ENCODE measurements at regions of chr17 and their contacts with region 1.

Region 1: GRCh38 chr17:66313995-66314659 is 11.7 kb downstream of the PRKCA start:
- DNase-seq: no peak
- H3K4me3 Mint-ChIP-seq: no peak overlapping the region
- H3K27ac Mint-ChIP-seq: peak overlapping the region; percentile 80
- H3K4me1 Mint-ChIP-seq: peaks cover 77% of the 10 kb centered on the region
- H3K27me3 Mint-ChIP-seq: no peaks in the 10 kb centered on the region

Region 2: DNA sequence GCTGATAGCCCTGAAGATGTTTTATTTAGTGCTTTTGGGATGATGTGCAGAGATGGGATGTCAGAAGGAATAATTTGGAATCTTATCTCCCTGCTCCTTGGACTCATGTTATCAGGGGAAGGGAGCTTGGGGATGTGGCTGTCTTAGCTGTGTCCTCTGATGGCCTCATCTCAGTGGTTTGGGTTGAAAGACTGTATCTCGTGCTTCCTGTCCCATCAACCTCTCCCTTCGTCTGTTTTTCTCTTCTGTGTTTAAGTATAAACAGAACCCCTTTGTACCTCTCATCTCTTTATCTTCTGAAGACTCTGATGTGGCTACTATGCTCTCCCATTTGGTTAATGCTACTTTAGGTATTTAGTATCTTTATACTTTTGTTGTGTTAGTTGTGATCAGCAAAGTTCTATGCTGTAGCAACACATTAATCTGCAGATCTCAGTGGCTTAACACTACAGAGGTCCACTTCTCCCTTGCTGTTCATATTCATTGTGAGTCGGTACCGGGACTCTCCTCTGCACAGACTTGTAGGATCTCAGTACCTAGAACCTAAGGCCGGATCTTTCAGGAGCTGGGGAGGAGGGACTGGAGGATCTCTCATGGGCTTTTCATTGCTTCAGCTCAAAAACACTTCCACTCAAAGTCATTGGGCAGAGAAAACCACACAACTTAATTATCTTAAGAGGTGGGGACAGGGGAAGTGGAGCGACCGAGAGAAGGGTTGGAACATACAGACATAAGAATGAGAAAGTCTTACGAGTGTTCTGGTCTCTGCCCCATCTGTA is 17.1 kb after region 1 on chr17:
- intact Hi-C with region 1: loop called (anchors 1 kb)
- DNase-seq: peak; percentile 17
- H3K4me3 Mint-ChIP-seq: peak overlapping the region; percentile 70
- H3K27ac Mint-ChIP-seq: peak overlapping the region; percentile 91
- H3K4me1 Mint-ChIP-seq: peaks cover 68% of the 10 kb centered on the region
- H3K27me3 Mint-ChIP-seq: no peaks in the 10 kb centered on the region

Measured in activated T-helper 1 cell treated with anti-CD3 and anti-CD28 coated beads, Interleukin-12 subunit alpha, Interleukin-12 subunit beta, Interleukin-2, Interleukin-4 antibody, amounts not matched to agents 30 ng/mL and 10 ng/mL and 1 ng/mL, durations not matched to agents 14 hours and 24 hours and 36 hours (primary cell).